ENCODE measurements at regions of chr16 and their contacts with region 1.

Region 1: DNA sequence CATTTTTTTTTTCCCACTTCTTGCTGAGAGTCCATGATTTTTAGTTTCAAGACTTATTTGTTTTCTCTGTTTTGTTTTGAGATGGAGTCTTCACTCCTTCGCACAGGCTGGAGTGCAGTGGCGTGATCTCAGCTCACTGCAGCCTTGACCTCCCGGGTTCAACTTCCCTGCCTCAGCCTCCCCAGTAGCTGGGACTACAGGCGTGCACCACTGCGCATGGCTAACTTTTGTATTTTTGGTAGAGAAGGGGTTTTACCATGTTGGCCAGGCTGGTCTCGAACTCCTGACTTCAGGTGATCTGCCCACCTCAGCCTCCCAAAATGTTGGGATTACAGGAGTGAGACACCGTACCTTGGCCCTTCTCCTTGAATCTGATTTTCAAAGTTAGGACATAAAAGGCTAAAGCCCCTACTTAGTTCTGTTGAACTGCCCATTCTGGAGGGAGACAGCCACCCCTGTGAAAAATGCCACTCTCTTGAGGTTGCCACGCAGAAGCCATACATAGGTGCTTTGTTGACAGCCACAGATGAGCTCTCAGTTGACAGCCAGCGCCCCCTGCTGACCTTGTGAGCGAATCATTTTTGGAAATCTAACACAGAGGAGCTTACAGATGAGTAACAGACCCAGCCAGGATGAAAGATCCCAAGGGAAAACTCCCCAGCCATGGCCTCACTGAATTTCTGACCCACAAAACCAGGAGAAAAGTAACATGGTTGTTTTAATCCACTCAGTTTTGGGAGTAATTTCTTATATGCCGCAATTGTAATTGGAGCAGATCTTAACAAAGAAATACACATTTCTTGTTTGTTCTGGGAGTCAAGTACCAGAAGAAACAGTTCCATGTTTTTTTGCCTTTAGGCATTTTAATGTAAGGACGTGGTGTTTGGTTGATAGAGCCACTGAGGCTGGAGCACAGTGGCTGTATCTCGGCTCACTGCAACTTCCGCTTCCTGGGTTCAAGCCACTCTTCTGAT is 38.8 kb downstream of the PKD1L3 start:
- DNase-seq: peak; percentile 79
- H3K4me3 ChIP-seq: no peak overlapping the region
- H3K27ac ChIP-seq: no peak overlapping the region
- H3K4me1 ChIP-seq: no peaks in the 10 kb centered on the region
- H3K27me3 ChIP-seq: no peaks in the 10 kb centered on the region
- CTCF ChIP-seq: peak; percentile 84 to 87

Region 2: GRCh38 chr16:71626018-71626857 is 335.1 kb before region 1 on chr16 and contains the start of gene MARVELD3:
- CTCF ChIA-PET with region 1: interaction called, 10 read pairs
- dilution Hi-C with region 1: no loop called
- in situ Hi-C with region 1: no loop called
- intact Hi-C with region 1: no loop called
- DNase-seq: peak; percentile 71
- H3K4me3 ChIP-seq: peak within 1 kb of the TSS; percentile 92 to 98 (median 98)
- H3K27ac ChIP-seq: peak within 1 kb of the TSS; percentile 49
- H3K4me1 ChIP-seq: peaks cover 5% of the 10 kb centered on the region
- H3K27me3 ChIP-seq: no peaks in the 10 kb centered on the region
- CTCF ChIP-seq: no peak
- total RNA-seq, gene MARVELD3: 7.3 to 13.2 TPM

Region 3: DNA sequence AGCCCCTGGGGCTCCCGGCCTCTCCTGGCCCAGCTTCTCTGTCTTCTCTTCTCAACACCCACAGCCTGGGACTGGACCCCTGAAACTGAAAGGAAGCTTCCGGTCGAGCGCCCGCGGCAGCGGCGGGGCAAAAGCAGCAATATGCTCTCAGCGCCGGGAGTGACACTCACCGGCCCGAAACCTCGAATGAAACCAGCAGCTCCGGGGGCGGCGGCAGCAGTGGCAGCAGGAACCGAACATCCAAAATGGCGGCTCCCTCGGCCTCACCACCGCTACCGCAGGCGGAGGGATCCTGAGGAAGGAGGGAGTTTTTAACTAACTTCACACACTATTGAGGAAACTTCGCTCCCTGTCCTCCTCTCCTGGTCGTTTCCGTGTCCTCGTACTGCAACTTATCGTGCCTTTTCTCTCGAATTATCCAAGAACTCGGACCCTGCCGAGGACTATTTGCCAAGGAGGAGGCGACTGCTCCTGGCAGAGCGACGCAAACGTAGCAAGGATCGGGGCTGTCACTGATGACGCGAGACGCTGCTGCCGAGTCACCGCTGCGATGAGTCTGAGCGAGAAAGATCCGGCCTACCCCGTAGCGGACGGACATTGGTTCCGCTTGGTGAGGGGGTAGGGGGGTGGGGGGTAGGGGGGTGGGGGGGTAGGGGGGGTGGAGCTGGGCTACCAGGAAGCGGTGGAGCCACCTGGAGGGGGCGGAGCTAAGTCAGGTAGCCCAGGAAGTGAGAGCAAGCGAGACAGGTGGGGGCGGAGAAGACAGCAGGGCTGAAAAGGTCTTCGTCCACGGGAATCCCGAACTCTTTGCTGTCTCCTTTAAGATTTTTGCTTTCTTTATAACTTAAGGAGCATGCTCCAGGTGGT is 152.5 kb before region 1 on chr16 and contains the start of gene AP1G1:
- CTCF ChIA-PET with region 1: interaction called, 3 read pairs
- dilution Hi-C with region 1: no loop called
- in situ Hi-C with region 1: no loop called
- intact Hi-C with region 1: loop called (anchors 1 kb)
- DNase-seq: peak; percentile 98
- H3K4me3 ChIP-seq: peak within 1 kb of the TSS; percentile 85 to 99 (median 90)
- H3K27ac ChIP-seq: peak within 1 kb of the TSS; percentile 100
- H3K4me1 ChIP-seq: peaks cover 10% of the 10 kb centered on the region
- H3K27me3 ChIP-seq: no peaks in the 10 kb centered on the region
- CTCF ChIP-seq: no peak
- total RNA-seq, gene AP1G1: 80.1 to 95.4 TPM

Region 4: GRCh38 chr16:71883849-71884638 is 77.3 kb before region 1 on chr16 and contains the start of gene ZNF821:
- CTCF ChIA-PET with region 1: interaction called, 9 read pairs
- dilution Hi-C with region 1: no loop called
- in situ Hi-C with region 1: no loop called
- intact Hi-C with region 1: loop called (anchors 1 kb)
- DNase-seq: peak; percentile 54
- H3K4me3 ChIP-seq: peak within 1 kb of the TSS; percentile 77 to 82 (median 79)
- H3K27ac ChIP-seq: peak within 1 kb of the TSS; percentile 32
- H3K4me1 ChIP-seq: peaks cover 10% of the 10 kb centered on the region
- H3K27me3 ChIP-seq: no peaks in the 10 kb centered on the region
- CTCF ChIP-seq: peak in 1 of 2 donors; percentile 42
- total RNA-seq, gene ZNF821: 5.6 to 6.2 TPM

Region 5: DNA sequence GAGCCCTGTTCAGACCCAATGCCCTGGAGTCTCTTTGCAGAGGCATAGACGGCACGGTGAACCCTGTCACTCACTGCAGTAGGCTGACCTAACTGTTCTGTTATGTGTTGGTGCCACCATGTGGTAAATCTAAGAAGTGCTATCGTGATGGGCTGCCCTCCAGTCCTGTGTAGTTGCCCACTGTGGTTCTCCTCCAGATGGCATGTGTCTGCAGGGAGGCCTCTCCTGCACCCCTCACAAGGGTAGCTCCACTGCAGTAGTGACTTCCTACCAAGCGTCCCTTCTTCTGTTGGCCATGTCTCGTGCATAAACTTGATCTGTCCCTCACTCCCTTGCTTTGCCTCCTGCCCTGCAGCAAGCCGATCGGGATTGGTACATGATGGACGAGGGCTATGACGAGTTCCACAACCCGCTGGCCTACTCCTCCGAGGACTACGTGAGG is 138.0 kb after region 1 on chr16:
- CTCF ChIA-PET with region 1: no interaction called
- dilution Hi-C with region 1: no loop called
- in situ Hi-C with region 1: no loop called
- intact Hi-C with region 1: loop called (anchors 1 kb)
- DNase-seq: peak; percentile 45
- H3K4me3 ChIP-seq: no peak overlapping the region
- H3K27ac ChIP-seq: no peak overlapping the region
- H3K4me1 ChIP-seq: peaks cover 17% of the 10 kb centered on the region
- H3K27me3 ChIP-seq: no peaks in the 10 kb centered on the region
- CTCF ChIP-seq: peak; percentile 52 to 56

Region 6: DNA sequence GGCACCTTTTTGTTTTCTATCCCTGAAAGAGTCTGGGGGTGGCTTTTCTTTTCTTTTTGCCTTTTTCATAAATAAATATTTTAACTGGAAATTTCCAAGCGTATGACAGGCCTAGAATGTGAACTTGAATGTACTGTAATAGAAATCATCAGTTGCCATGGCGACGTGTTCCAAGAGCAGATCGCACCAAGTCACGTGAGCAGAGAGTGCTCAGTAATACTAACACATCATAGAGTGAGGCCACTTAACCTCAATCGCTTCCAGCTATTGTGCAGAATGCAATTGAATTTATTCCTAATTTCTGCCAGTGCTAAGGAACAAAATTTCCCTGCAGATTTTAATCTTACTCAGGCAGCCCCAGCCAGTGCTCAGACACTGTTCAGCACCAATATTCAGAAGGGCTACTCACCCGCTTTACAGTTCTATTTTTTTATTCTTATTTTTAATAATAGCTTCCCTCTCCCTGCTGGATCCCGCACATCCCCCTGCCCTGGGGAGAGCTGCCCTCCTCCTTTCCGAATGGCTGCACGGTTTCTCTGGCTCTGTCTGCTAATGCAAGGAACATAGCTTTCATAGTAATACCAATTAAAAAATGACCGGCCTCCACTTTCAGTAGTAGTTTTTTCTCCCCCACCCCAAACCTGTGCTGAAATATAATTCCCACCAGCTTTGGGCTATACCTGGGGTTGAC is 236.8 kb after region 1 on chr16:
- CTCF ChIA-PET with region 1: no interaction called
- dilution Hi-C with region 1: no loop called
- in situ Hi-C with region 1: no loop called
- intact Hi-C with region 1: no loop called
- DNase-seq: no peak
- H3K4me3 ChIP-seq: no peak overlapping the region
- H3K27ac ChIP-seq: no peak overlapping the region
- H3K4me1 ChIP-seq: peaks cover 15% of the 10 kb centered on the region
- H3K27me3 ChIP-seq: no peaks in the 10 kb centered on the region
- CTCF ChIP-seq: no peak